AG04449 (cell line): ENCODE measurements at regions of chr11 and their contacts with region 1.

Region 1: DNA sequence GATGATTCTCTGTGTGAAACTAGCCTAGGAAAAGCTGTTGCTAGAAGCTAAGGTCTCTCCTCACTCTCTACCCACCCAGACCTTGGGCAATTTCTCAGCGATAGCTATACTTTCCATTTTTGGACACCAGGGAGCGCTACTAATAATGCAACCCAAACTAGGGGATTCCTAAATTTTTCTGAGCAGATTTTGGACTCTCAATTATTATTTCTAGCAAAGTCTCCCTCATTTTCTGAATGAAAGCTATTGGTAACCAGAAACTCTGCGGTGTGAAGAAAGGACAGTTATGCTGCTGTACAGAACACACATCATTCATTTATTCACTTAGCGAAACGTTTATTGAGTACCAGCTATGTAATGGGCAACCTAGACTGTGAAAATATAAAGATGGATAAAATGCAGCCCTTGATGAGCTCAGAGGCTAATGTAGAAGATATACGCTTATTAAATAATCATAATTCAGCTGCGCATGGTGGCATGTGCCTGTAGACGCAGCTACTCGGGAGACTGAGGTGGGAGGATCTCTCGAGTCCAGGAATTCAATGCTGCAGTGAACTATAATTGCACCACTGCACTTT is 6.1 kb upstream of the STIM1 start:
- DNase-seq: no peak
- H3K4me3 ChIP-seq: no peak overlapping the region
- CTCF ChIP-seq: peak; percentile 52

Region 2: GRCh38 chr11:3867209-3868091 is 18.1 kb after region 1 on chr11:
- CTCF ChIA-PET with region 1: interaction called, 106 read pairs
- POLR2A ChIA-PET with region 1: no interaction called
- DNase-seq: no peak
- H3K4me3 ChIP-seq: no peak overlapping the region
- CTCF ChIP-seq: no peak

Region 3: DNA sequence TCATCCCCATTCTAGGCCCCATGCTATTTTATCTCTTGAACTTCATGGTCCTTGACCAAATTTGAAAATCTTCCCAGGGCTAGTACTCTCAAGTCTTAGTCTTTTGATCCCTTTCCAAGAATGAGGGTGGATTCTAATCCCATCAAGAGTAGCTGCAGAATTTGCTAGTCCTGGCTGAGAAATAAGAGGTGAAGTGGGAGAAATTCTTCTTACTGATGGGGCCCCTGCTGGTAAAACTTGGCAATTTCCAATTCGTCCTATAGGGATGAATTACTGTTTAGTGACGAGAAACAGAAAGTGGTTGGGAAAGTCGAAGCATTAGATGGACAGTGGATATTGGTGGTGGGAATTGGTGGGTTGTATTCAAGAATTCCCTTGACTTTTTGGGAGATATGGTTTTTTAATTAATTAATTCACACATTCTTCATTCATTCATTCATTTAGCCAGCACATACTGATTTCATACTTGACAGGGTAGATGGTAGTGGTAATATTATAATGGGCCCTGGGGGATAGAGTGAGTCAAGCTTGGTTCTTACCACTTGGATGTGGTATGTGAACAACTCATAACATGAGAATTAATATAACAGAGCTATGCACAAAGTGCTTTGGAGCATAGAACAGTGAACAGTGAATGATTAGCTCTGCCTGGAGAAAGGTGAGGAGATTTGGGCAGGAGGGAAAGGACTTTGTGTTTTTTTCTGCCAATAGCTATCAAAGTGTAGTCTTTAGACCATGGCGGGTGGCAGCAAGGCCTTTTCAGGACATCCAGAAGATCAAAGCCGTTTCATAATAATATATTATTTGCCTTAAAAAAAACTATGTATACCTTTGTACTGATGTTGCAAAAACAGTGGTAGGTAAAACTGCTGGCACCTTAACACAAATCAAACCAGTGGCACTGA is 109.9 kb after region 1 on chr11:
- CTCF ChIA-PET with region 1: interaction called, 22 read pairs
- POLR2A ChIA-PET with region 1: no interaction called
- DNase-seq: peak; percentile 55
- H3K4me3 ChIP-seq: no peak overlapping the region
- CTCF ChIP-seq: no peak

Region 4: GRCh38 chr11:3984896-3985295 is 135.5 kb after region 1 on chr11:
- CTCF ChIA-PET with region 1: interaction called, 38 read pairs
- POLR2A ChIA-PET with region 1: no interaction called
- DNase-seq: no peak
- H3K4me3 ChIP-seq: no peak overlapping the region
- CTCF ChIP-seq: peak; percentile 32